Gastrocnemius medialis (tissue), 4 donors: ENCODE measurements at regions of chrX and their contacts with region 1.

Region 1: DNA sequence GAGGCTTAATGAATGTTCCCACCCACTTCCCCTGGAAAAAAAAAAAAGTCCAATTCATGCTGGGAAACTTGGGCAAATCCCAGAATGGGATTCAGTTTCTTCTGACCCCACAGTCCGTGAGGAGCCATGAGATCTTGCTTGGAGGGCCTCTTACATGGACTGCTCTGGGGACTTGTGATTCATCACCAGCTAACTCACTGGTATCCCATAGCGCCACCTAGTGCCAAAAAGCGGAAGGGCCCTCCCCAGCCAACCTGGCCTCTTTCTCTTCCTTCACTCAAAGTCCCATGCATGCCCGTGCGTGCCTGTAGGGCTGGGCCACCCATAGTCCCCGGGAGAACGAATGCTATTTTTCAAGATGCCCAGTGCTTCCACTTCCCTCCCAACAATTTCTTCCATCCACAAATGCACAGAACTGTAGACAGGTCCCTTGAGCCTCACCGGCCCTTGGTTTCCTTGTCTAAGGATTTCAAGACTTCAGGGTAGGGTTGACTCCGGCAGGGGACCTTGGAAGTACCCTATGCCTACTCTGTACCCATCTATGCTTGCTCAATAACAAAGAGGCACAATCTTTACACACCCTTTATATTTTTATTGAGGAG is 5.1 kb downstream of the RTL5 start:
- DNase-seq: peak; percentile 47 to 67
- ATAC-seq: peak; percentile 86 to 93
- H3K4me3 ChIP-seq: no peak overlapping the region
- H3K27ac ChIP-seq: peak overlapping the region in 3 of 4 donors; percentile 41 to 65 (median 61)
- H3K4me1 ChIP-seq: peaks cover 3 to 4% of the 10 kb centered on the region in 2 donors
- H3K27me3 ChIP-seq: peaks cover 0 to 13% (median 5%) of the 10 kb centered on the region in 3 donors
- CTCF ChIP-seq: peak; percentile 42 to 86 (median 77)
- POLR2A ChIP-seq: no peak

Region 2: GRCh38 chrX:71315917-71316316 is 810.7 kb before region 1 on chrX:
- in situ Hi-C with region 1: no loop called
- intact Hi-C with region 1: no loop called
- DNase-seq: no peak
- ATAC-seq: peak in 1 of 2 donors; percentile 62
- H3K4me3 ChIP-seq: no peak overlapping the region
- H3K27ac ChIP-seq: no peak overlapping the region
- H3K4me1 ChIP-seq: no peaks in the 10 kb centered on the region
- H3K27me3 ChIP-seq: no peaks in the 10 kb centered on the region
- CTCF ChIP-seq: no peak
- POLR2A ChIP-seq: no peak

Region 3: DNA sequence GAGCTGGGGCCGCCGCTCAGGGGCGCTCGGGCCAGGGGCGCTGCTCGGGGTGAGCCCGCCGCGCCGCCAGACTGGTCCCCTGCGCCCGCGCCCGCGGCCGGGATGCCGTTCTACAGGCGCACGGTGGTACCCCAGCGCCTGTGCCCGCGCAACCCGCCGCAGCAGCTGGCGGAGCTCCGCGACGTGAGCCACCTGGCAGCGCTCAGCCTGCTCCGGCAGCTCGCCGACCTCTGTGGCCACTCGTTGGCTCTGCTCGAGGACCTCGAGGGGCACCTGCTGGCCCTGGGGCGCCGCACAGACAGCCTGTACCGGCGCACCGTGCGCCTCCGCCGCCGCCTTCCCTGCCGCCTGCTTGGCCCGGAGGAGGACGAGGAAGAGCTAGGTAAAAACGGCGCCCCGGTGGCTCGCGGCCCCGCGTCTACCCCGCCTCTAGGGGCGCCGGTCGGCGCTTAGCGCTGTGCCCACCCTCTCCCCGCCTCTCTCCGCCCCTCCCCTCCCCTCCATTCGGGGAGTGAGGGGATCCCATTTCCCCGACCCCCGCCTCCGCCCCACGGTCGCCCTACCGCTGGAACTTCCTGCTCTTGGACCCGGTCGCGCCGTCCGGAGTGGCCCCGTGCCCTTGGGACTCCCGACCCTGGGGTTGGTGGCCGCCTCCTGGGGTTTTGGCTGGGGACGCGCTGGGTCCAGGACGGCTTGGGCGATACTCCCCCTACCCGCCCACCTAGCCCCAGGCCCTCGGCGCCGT is 215.5 kb before region 1 on chrX:
- in situ Hi-C with region 1: no loop called
- intact Hi-C with region 1: loop called (anchors 2 kb)
- DNase-seq: no peak
- ATAC-seq: peak in 1 of 2 donors; percentile 36
- H3K4me3 ChIP-seq: peak overlapping the region; percentile 36 to 51 (median 46)
- H3K27ac ChIP-seq: peak overlapping the region in 2 of 4 donors; percentile 18 to 25
- H3K4me1 ChIP-seq: peaks cover 0 to 3% of the 10 kb centered on the region in 2 donors
- H3K27me3 ChIP-seq: peaks cover 0 to 27% (median 8%) of the 10 kb centered on the region in 3 donors
- CTCF ChIP-seq: peak in 2 of 5 experiments; percentile 10 to 40
- POLR2A ChIP-seq: no peak

Region 4: DNA sequence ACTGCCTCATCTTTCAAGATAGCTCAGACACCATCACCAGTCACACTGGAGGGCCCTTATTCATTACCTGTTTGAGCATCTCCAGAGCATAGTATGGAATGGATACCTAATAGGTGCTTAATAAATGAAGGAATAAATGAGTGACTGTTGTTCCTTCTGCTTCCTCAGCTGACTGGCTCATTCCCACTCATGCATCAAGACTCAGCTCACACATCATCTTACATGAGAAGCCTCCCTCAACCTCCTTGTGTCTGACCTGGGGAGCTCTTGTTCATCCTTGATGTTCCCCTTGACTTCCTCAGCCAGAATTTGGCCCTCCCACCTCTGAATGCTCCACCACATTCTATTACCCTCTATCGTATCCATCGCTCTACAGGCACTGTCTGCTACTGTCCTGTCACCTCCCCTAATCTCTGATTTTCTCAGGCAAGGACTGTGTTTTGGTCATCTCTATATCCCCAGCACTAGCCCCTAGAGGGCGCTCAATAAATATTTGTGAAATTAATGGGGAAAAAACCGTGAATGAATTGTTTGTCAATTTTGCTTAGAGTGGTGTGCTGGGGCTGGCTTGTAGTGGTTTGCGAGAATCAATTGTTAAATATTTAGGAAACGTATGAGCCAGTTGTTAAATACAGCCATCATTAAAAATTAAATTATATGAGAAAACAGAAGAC is 127.7 kb before region 1 on chrX:
- in situ Hi-C with region 1: loop called in 1 of 4 experiments (anchors 10 kb)
- intact Hi-C with region 1: loop called (anchors 1 kb)
- DNase-seq: no peak
- ATAC-seq: peak; percentile 30 to 36
- H3K4me3 ChIP-seq: no peak overlapping the region
- H3K27ac ChIP-seq: no peak overlapping the region
- H3K4me1 ChIP-seq: no peaks in the 10 kb centered on the region
- H3K27me3 ChIP-seq: no peaks in the 10 kb centered on the region
- CTCF ChIP-seq: peak in 4 of 5 experiments; percentile 11 to 61 (median 48)
- POLR2A ChIP-seq: no peak

Region 5: DNA sequence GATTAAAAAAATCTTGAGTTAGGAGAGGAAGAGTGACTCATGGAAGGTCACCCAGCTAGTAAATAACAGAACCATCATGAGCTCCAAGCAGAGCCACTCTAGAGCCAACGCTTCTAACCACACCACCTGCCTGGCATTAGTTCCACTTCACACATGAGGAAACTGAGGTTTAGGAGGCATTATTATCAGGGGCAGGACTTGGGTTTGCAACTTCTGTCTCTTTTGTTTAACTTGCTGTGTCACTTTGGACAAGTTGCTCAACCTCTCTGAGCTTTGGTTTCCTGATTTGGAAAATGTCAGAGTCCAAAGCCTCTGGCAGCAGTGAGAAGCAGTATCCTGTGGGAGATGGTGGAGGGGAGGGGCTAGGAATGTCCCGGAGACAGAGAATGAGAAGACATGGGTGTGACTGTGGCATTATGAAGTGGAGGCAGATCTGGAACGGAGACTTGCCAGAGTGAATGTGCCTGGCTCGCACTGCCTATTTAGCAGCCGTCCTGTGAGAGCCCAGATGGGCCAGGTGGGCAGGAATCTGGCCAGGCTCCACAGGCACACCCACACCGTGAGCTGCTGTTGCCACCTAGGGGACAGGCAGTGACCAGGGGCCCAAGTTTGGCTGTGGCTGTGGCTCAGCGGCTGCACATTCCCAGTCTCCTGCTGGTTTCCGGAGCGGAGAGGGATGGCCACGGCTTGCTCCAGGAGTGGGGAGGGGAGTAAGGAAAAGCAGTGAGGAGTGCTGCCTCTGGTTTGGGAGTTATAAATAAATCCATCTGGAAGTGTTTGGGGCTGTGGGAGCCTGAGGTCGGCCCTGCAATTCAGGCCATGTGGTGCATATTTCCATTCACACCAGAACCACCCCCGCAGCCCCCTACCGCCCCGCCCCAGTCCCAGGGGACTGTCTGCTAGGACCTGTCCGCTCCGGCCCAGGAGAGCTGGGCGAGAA is 122.6 kb before region 1 on chrX:
- in situ Hi-C with region 1: loop called in 1 of 4 experiments (anchors 10 kb)
- intact Hi-C with region 1: loop called (anchors 1 kb)
- DNase-seq: peak in 1 of 2 donors; percentile 42
- ATAC-seq: peak; percentile 47 to 71
- H3K4me3 ChIP-seq: no peak overlapping the region
- H3K27ac ChIP-seq: peak overlapping the region in 3 of 4 donors; percentile 5 to 43 (median 33)
- H3K4me1 ChIP-seq: no peaks in the 10 kb centered on the region
- H3K27me3 ChIP-seq: peaks cover 0 to 2% (median 0%) of the 10 kb centered on the region in 3 donors
- CTCF ChIP-seq: peak in 1 of 5 experiments; percentile 25
- POLR2A ChIP-seq: no peak

Region 6: DNA sequence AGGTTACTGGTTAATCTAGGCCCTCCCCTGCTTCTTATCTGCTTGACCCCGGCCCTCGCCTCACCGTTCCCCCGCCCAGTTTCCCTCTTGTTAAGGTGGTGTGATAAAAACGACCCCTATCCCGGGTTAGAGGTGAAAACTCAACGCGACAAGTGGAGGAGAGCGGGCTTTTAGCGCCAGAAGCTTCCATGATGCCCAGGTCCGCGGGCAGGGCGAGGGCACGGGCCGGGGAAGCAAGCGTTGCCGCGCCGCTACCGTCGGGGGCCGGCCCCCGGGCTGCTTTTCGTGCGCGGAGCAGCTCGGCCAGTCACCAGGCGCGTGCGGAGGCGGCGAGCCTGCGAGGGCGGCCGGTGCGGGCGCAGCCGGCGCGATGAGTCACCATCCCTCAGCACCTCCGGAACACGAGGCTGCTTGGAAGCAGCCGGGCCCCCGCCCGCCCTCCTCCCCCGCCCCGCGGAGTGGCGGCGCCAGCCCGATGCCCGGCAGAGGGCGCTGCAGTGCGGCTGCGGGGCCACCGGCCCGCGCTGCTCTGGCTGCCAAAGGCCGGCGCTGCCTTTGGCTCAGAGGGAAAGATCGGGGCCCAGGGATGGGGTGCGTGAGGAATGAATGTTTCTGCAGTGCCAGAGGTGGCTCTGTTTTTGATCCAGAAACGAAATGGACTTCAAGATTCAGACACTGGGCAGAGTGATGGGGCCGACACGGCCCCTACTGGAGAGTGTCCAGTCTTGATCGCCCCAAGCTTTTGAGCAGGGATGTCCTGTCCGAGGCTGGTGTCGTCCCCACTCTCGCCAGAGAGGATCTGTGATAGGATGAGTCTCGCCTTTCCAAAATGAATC is 108.1 kb before region 1 on chrX:
- in situ Hi-C with region 1: loop called in 3 of 4 experiments (anchors 5 to 10 kb)
- intact Hi-C with region 1: loop called (anchors 1 kb)
- DNase-seq: peak; percentile 70 to 86
- ATAC-seq: peak; percentile 94
- H3K4me3 ChIP-seq: peak overlapping the region in 3 of 4 donors; percentile 24 to 47 (median 46)
- H3K27ac ChIP-seq: peak overlapping the region; percentile 42 to 74 (median 66)
- H3K4me1 ChIP-seq: no peaks in the 10 kb centered on the region
- H3K27me3 ChIP-seq: peaks cover 0 to 6% (median 0%) of the 10 kb centered on the region in 3 donors
- CTCF ChIP-seq: peak; percentile 32 to 91 (median 74)
- POLR2A ChIP-seq: no peak

Region 7: DNA sequence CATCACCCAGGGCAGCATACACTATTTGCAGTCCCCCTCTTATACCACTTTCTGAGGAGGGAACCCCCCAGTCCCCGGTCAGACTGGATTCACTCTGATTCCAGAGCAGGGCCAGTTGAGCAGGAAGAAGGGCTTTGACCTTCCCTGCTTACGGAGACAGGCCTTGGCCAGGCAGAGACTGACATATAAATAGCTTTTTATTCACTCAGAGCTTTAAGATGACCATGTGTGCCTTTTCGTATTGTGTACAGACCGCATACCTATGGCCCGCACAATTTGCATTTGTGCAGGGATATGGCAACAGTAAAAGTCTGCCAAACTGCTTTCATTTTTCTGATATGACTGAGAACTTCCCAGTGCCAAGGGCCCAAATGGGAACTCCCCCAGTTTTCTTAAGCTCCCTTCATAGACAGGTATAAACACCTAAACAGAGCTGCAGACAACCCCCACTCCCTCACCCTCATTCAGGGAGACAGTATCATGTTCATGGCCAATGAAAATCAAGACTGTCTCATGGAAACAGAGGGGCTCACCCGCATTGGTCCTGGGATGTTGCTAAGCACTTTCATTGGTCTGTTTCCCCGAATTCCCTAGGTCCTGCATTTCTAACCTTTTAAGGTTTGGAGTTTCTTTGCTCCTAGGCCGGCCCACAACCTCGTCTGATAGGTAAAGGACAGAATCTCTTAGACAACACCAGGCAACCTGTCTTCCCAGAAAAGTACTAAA is 80.9 kb before region 1 on chrX:
- in situ Hi-C with region 1: no loop called
- intact Hi-C with region 1: no loop called
- DNase-seq: no peak
- ATAC-seq: no peak
- H3K4me3 ChIP-seq: no peak overlapping the region
- H3K27ac ChIP-seq: no peak overlapping the region
- H3K4me1 ChIP-seq: peaks cover 3 to 6% of the 10 kb centered on the region in 2 donors
- H3K27me3 ChIP-seq: peaks cover 0 to 4% (median under 1%) of the 10 kb centered on the region in 3 donors
- CTCF ChIP-seq: no peak
- POLR2A ChIP-seq: no peak

Region 8: GRCh38 chrX:72181178-72182125 is 54.8 kb after region 1 on chrX and contains the start of gene PIN4:
- in situ Hi-C with region 1: no loop called
- intact Hi-C with region 1: loop called (anchors 5 kb)
- DNase-seq: peak; percentile 83 to 93
- ATAC-seq: peak; percentile 99 to 100
- H3K4me3 ChIP-seq: peak within 1 kb of the TSS; percentile 74 to 85 (median 79)
- H3K27ac ChIP-seq: peak within 1 kb of the TSS; percentile 65 to 92 (median 82)
- H3K4me1 ChIP-seq: peaks cover 12 to 16% of the 10 kb centered on the region in 2 donors
- H3K27me3 ChIP-seq: no peaks in the 10 kb centered on the region
- CTCF ChIP-seq: no peak
- POLR2A ChIP-seq: peak; percentile 33 to 58
- total RNA-seq, gene PIN4: 4.7 to 11.2 (median 8.5) TPM